Pancreas (tissue), 10 donors: ENCODE measurements at regions of chr15 and their contacts with region 1.

Region 1: GRCh38 chr15:81265944-81266775 is 57.8 kb downstream of the STARD5 start:
- DNase-seq: peak; percentile 66 to 91 (median 82)
- ATAC-seq: peak; percentile 96 to 97 (median 97)
- H3K4me3 ChIP-seq: peak overlapping the region in 1 of 4 donors; percentile 30
- H3K27ac ChIP-seq: no peak overlapping the region
- H3K4me1 ChIP-seq: peaks cover 6 to 9% (median 9%) of the 10 kb centered on the region in 3 donors
- H3K27me3 ChIP-seq: no peaks in the 10 kb centered on the region
- CTCF ChIP-seq: peak; percentile 78 to 86 (median 82)

Region 2: DNA sequence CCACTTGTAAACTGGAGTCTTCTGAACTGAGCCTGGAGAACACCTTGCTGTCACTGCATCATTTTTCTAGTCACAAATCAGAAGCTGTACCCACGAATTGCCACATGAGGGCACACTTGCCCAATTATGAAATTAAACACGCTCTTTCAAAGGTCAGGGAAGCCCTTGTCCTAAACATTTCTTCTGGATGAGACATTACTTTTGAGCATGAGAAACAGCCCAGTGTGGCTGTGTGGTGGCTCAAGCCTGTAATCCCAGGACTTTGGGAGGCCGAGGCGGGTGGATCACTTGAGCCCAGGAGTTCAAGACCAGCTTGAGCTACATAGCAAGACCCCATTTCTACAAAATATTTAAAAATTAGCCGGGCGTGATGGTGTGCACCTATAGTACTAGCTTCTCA is 159.6 kb before region 1 on chr15:
- intact Hi-C with region 1: loop called (anchors 5 to 10 kb)
- DNase-seq: peak in 3 of 6 donors; percentile 34 to 76 (median 35)
- ATAC-seq: peak; percentile 75 to 96 (median 92)
- H3K4me3 ChIP-seq: no peak overlapping the region
- H3K27ac ChIP-seq: no peak overlapping the region
- H3K4me1 ChIP-seq: peaks cover 0 to 3% (median 0%) of the 10 kb centered on the region in 3 donors
- H3K27me3 ChIP-seq: no peaks in the 10 kb centered on the region
- CTCF ChIP-seq: peak; percentile 50 to 67 (median 58)

Region 3: GRCh38 chr15:81152339-81152738 is 113.8 kb before region 1 on chr15:
- intact Hi-C with region 1: loop called in 1 of 3 experiments (anchors 5 kb)
- DNase-seq: no peak
- ATAC-seq: no peak
- H3K4me3 ChIP-seq: no peak overlapping the region
- H3K27ac ChIP-seq: no peak overlapping the region
- H3K4me1 ChIP-seq: no peaks in the 10 kb centered on the region
- H3K27me3 ChIP-seq: no peaks in the 10 kb centered on the region
- CTCF ChIP-seq: no peak